HepG2 (cell line): ENCODE measurements at regions of chr3 and their contacts with region 1.

Region 1: GRCh38 chr3:143972505-143973255 is 1.1 kb downstream of the DIPK2A start:
- DNase-seq: peak; percentile 57
- ATAC-seq: peak; percentile 66
- H3K4me3 ChIP-seq: peak overlapping the region; percentile 72 to 80 (median 77); a peak in 5 of 6 replicates
- H3K27ac ChIP-seq: peak overlapping the region; percentile 73
- H3K4me1 ChIP-seq: peaks cover 32% of the 10 kb centered on the region
- H3K27me3 ChIP-seq: 0 out of 5 replicates have a peak, but pooled peaks cover 0 to 5% of the 10 kb centered on the region in 2 experiments
- CTCF ChIP-seq: peak; percentile 47
- EP300 ChIP-seq: no peak
- POLR2A ChIP-seq: no peak
- RAD21 ChIP-seq: no peak

Region 2: GRCh38 chr3:144031938-144032337 is 59.3 kb after region 1 on chr3:
- CTCF ChIA-PET with region 1: no interaction called
- POLR2A ChIA-PET with region 1: no interaction called
- in situ Hi-C with region 1: no loop called
- intact Hi-C with region 1: loop called (anchors 2 kb)
- DNase-seq: no peak
- ATAC-seq: no peak
- H3K4me3 ChIP-seq: no peak overlapping the region
- H3K27ac ChIP-seq: no peak overlapping the region
- H3K4me1 ChIP-seq: no peaks in the 10 kb centered on the region
- H3K27me3 ChIP-seq: no peaks in the 10 kb centered on the region
- CTCF ChIP-seq: no peak
- EP300 ChIP-seq: no peak
- POLR2A ChIP-seq: no peak
- RAD21 ChIP-seq: no peak

Region 3: GRCh38 chr3:144162079-144162478 is 189.4 kb after region 1 on chr3:
- CTCF ChIA-PET with region 1: no interaction called
- POLR2A ChIA-PET with region 1: interaction called, 6 read pairs
- in situ Hi-C with region 1: no loop called
- intact Hi-C with region 1: loop called (anchors 2 kb)
- DNase-seq: peak; percentile 75
- ATAC-seq: peak; percentile 99
- H3K4me3 ChIP-seq: no peak overlapping the region
- H3K27ac ChIP-seq: no peak overlapping the region
- H3K4me1 ChIP-seq: peaks cover 26% of the 10 kb centered on the region
- H3K27me3 ChIP-seq: no peaks in the 10 kb centered on the region
- CTCF ChIP-seq: no peak
- EP300 ChIP-seq: peak in 1 of 2 experiments; percentile 78; a peak in 1 of 4 replicates
- POLR2A ChIP-seq: no peak
- RAD21 ChIP-seq: no peak